ENCODE measurements at regions of chr11 and their contacts with region 1.

Region 1: DNA sequence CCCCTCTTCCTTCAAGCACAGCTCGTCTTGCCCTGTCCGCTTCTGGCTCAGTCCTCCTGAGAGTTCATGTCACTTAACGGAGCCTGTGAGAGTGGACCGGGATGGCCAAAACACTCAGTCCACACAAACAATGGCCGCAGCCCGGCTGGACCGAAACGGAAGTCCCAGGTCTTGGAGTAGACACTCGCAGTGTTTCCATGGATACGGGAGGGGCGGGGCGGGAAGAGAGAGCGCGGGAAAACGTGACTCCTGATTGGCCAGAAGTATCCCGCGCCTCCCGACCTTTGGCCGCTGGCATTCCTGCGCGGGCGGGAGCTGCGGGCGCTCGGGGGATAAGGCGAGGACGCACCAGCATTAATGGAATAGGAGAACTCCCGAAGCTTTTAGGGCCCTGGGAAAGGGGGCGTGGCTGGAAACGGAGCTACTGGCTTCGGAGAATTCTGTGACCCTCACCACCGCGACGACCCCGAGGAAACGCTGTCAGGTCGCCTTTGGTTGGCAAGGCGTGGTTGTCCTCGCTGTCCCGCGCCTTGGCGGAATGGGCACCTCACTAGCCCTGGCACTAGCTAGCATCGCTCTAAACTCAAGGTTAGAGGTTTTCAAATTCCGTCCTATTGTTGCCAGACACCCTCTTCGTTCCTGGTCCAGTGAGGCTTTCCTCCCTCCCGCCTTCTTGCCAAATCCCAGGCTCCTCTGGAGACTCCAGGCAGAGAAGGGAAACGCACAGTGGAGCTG is at the starts of genes NLRP14 and ZNF214:
- DNase-seq: peak; percentile 77 to 97 (median 87)

Region 2: GRCh38 chr11:6986487-6986886 is 33.9 kb before region 1 on chr11:
- intact Hi-C with region 1: loop called (anchors 2 kb)
- DNase-seq: no peak